ENCODE measurements at regions of chr7 and their contacts with region 1.

Region 1: GRCh38 chr7:149742075-149742701 is 31.2 kb downstream of the ZNF467 start:
- DNase-seq: peak; percentile 90
- ATAC-seq: peak; percentile 85

Region 2: DNA sequence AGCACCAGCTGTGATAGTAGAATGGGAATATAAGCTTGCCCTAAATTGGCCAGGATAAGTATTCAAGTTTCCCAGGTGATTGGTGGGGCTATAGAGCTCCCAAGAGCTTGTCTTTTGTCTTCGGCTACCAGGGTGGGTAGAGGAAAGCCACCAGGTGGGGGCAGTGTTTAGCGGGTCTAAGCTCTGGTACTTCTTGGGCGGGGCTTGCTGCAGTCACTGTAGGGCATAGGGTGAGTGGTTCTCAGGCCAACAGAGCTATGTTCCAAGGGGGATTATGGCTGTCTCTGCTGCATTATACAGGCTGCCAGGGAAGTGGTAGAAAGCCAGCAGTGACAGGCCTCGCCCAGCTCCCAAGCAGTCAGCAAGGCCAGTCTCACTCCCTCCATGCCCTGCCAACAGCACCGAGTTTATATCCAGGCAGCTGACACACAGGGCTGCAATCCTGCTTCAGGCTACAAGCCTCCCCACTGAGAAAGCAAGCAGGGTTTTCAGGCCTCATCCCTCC is 79.5 kb before region 1 on chr7:
- intact Hi-C with region 1: loop called (anchors 2 kb)
- DNase-seq: peak; percentile 75
- ATAC-seq: peak; percentile 92

Region 3: DNA sequence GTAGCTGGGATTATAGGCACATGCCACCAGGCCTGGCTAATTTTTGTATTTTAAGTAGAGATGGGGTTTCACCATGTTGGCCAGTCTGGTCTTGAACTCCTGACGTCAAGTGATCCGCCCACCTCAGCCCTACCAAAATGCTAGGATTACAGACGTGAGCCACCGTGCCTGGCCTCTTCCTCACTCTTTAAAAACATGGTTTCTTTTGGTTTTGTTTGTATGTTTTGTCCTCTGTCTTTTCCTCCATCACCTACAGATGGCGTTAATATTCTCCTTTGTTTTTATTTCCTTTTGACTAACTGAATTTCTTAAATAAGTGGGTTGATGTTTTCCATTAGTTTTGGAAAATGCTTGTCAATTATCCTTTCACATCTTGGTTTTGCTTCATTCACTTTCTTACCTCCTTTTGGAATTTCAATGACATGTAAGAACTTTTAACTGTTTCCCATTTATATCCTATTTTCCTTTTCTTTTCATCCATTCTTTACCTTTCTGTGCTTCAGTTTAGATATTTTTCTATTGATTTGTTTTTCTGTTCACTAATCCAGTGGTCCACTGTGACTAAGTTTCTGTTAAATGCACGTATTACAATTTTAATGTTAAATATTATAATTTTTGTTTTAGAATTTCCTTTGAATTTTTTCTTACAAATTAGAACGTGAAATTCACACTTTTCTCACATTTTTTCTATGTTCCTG is 72.9 kb before region 1 on chr7:
- intact Hi-C with region 1: loop called (anchors 1 kb)
- DNase-seq: no peak
- ATAC-seq: no peak

Measured in Right ventricle myocardium inferior (tissue), 1 donor.